Activated CD8-positive, alpha-beta T cell treated with anti-CD3 and anti-CD28 coated beads for 36 hours (primary cell): ENCODE measurements at regions of chr22 and their contacts with region 1.

Region 1: GRCh38 chr22:39532215-39533071 is at the start of gene RPS19BP1:
- DNase-seq: peak; percentile 100
- ATAC-seq: peak; percentile 90
- H3K4me3 Mint-ChIP-seq: peak within 1 kb of the TSS; percentile 86
- H3K27ac Mint-ChIP-seq: peak within 1 kb of the TSS; percentile 93
- H3K4me1 Mint-ChIP-seq: peaks cover 49% of the 10 kb centered on the region
- H3K27me3 Mint-ChIP-seq: no peaks in the 10 kb centered on the region
- CTCF ChIP-seq: no peak
- total RNA-seq, gene RPS19BP1: 68.5 to 71.7 TPM

Region 2: GRCh38 chr22:39490135-39490798 is 42.2 kb before region 1 on chr22:
- CTCF ChIA-PET with region 1: interaction called, 323 read pairs
- POLR2A ChIA-PET with region 1: interaction called, 12 read pairs
- intact Hi-C with region 1: loop called (anchors 5 kb)
- DNase-seq: peak; percentile 92
- ATAC-seq: peak; percentile 99
- H3K4me3 Mint-ChIP-seq: peak overlapping the region; percentile 4
- H3K27ac Mint-ChIP-seq: no peak overlapping the region
- H3K4me1 Mint-ChIP-seq: peaks cover 12% of the 10 kb centered on the region
- H3K27me3 Mint-ChIP-seq: no peaks in the 10 kb centered on the region
- CTCF ChIP-seq: no peak

Region 3: GRCh38 chr22:39508393-39508792 is 24.1 kb before region 1 on chr22:
- CTCF ChIA-PET with region 1: interaction called, 323 read pairs
- POLR2A ChIA-PET with region 1: interaction called, 234 read pairs
- intact Hi-C with region 1: no loop called
- DNase-seq: no peak
- ATAC-seq: no peak
- H3K4me3 Mint-ChIP-seq: no peak overlapping the region
- H3K27ac Mint-ChIP-seq: peak overlapping the region; percentile 68
- H3K4me1 Mint-ChIP-seq: peaks cover 42% of the 10 kb centered on the region
- H3K27me3 Mint-ChIP-seq: no peaks in the 10 kb centered on the region
- CTCF ChIP-seq: no peak

Region 4: GRCh38 chr22:39543095-39543494 is 10.7 kb after region 1 on chr22:
- CTCF ChIA-PET with region 1: interaction called, 21 read pairs
- POLR2A ChIA-PET with region 1: no interaction called
- intact Hi-C with region 1: no loop called
- DNase-seq: peak; percentile 59
- ATAC-seq: peak; percentile 47
- H3K4me3 Mint-ChIP-seq: no peak overlapping the region
- H3K27ac Mint-ChIP-seq: no peak overlapping the region
- H3K4me1 Mint-ChIP-seq: peaks cover 11% of the 10 kb centered on the region
- H3K27me3 Mint-ChIP-seq: peaks cover 24% of the 10 kb centered on the region
- CTCF ChIP-seq: peak; percentile 38

Region 5: DNA sequence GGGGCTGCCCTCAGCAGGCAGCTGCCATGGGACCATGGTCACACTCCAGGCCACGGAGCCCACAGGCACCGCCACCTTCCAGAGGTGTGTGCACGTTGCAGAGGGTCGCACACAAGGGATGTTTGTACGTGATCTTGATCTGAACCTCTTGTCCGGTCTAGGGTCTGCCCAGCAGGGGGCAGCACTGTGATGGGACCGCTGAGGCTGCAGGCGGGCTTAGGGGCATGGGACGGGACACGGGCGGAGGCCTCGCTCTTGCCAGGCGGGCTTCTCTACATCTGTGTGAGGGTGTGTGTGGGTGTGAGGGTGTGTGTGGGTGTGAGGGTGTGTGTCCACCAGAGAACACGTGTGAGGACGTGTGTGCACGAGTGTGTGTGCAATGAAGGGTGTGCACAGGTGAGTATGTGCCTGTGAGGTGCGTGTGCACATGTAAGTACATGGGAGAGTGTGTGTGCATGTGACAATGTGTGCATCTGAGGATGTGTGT is 90.5 kb after region 1 on chr22:
- CTCF ChIA-PET with region 1: no interaction called
- POLR2A ChIA-PET with region 1: no interaction called
- intact Hi-C with region 1: no loop called
- DNase-seq: peak; percentile 83
- ATAC-seq: peak; percentile 78
- H3K4me3 Mint-ChIP-seq: no peak overlapping the region
- H3K27ac Mint-ChIP-seq: no peak overlapping the region
- H3K4me1 Mint-ChIP-seq: peaks cover 4% of the 10 kb centered on the region
- H3K27me3 Mint-ChIP-seq: peaks cover 11% of the 10 kb centered on the region
- CTCF ChIP-seq: peak; percentile 72

Region 6: DNA sequence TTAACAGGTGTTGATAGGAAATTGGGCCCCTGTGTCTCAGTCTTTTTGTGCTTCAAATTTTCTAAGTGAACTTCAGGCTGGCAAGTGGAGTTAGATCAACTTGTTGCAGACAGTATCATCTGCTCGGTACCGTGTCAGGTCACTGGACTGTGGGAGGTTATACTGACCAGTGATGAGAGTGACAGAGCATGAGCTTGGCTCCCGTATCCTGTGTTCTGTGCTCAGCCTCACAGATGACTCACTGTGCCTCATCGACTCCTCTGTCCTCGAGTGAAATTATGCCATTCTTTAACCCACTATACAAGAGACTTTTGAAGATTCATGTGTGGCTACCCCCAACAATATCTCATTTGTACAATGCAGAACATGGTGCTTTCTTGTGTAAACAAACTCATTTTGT is 376.3 kb after region 1 on chr22:
- CTCF ChIA-PET with region 1: interaction called, 12 read pairs
- POLR2A ChIA-PET with region 1: interaction called, 4 read pairs
- intact Hi-C with region 1: loop called (anchors 5 kb)
- DNase-seq: peak; percentile 66
- ATAC-seq: peak; percentile 55
- H3K4me3 Mint-ChIP-seq: peak overlapping the region; percentile 80
- H3K27ac Mint-ChIP-seq: peak overlapping the region; percentile 92
- H3K4me1 Mint-ChIP-seq: peaks cover 61% of the 10 kb centered on the region
- H3K27me3 Mint-ChIP-seq: no peaks in the 10 kb centered on the region
- CTCF ChIP-seq: no peak

Region 7: DNA sequence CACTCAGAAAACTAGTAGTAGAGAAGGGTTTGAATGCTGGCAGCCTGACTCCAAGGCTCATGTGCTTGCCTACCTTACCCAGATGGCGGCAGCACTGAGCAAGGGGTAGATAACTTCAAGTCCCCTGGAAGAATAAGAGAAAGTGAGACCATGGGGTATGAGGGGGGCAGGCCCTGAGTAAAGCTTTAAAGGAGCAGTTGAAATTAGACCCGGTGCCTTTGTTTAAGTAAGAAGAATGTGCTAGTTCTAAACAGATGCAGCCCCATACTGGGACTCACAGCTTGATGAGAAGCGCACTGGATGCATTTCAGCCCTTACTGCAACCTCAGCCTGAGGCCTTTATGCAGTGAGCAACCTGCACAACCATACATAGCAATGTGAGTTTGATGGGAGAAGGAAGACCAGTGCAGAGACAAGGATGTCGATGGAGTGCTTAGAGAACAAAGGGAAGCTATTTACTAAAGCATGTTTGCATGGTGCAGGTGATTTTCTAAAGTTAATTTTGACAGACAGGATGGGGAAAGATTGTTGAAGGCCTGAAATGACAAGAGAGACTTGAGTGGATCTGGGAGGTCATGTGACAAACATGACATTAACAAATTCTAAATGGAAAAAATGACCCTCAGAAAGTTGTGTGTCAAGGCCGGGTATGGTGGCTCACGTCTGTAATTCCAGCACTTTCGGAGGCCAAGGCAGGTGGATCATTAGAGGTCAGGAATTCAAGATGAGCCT is 400.6 kb after region 1 on chr22:
- CTCF ChIA-PET with region 1: interaction called, 24 read pairs
- POLR2A ChIA-PET with region 1: no interaction called
- intact Hi-C with region 1: no loop called
- DNase-seq: peak; percentile 81
- ATAC-seq: peak; percentile 67
- H3K4me3 Mint-ChIP-seq: peak overlapping the region; percentile 72
- H3K27ac Mint-ChIP-seq: peak overlapping the region; percentile 90
- H3K4me1 Mint-ChIP-seq: peaks cover 50% of the 10 kb centered on the region
- H3K27me3 Mint-ChIP-seq: no peaks in the 10 kb centered on the region
- CTCF ChIP-seq: peak; percentile 92

Region 8: DNA sequence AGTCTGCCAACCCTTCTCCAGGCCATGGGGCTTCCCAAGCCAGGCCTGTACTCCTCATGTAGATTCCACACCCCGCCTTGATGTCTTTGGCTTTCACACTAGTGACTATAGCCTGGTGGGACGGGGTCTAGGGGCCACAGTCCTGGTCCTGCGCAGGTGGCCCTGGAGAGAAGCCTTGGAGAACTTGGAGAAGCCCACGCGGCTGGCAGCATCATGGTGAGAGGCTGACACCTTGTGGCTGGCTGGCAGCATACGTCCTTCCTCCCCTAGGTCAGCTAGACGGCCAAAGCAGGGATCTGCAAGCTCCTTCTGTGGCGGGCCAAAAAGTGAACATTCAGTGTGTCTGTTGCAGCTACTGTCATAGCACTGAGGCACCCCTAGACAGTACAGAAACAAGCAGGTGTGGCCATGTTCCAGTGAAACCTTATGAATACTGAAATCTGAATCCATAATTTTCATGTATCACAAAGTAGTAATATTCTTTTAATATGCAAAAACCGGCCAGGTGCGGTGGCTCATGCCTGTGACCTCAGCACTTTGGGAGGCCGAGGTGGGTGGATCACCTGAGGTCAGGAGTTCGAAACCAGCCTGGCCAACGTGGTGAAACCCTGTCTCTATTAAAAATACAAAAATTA is 504.3 kb after region 1 on chr22:
- CTCF ChIA-PET with region 1: interaction called, 37 read pairs
- POLR2A ChIA-PET with region 1: interaction called, 3 read pairs
- intact Hi-C with region 1: no loop called
- DNase-seq: peak; percentile 75
- ATAC-seq: peak; percentile 87
- H3K4me3 Mint-ChIP-seq: no peak overlapping the region
- H3K27ac Mint-ChIP-seq: no peak overlapping the region
- H3K4me1 Mint-ChIP-seq: no peaks in the 10 kb centered on the region
- H3K27me3 Mint-ChIP-seq: peaks cover 5% of the 10 kb centered on the region
- CTCF ChIP-seq: peak; percentile 87